ENCODE measurements at regions of chr3 and their contacts with region 1.

Region 1: DNA sequence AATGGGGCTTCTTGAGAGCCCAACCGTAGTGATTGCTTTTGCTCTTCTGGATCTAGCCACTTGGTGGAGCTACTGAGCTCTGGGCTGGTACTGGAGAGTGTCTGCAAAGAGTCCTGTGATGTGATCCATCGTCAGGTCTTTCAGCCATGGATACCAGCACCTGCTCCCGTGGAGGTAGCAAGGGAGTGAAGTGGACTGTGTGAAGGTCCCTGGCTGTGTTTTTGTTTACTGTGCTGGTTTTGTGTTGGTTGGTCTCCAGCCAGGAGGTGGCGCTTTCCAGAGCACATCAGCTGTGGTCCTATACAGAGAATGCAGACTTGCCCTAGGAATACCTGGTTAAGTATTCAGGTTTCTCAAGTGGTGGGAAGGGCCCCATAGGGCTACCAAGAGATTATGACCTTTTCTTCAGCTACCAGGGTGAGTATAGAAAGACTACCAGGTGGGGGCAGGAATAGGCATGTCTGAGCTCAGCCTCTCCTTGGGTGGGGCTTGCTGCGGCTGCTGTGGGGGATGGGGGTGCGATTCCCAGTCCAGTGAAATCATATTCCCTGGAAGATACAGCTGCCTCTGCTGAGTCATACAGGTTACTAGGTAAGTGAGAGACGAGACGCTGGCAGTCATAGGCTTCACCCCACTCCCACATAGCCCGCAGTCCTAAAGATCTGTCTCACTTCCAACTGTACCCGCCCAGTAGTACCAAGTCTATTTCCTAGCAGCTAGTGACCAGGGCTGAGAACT is 733.7 kb downstream of the ZNF385D start:
- DNase-seq: no peak
- ATAC-seq: peak; percentile 83
- H3K4me3 ChIP-seq: no peak overlapping the region
- H3K27ac ChIP-seq: no peak overlapping the region
- H3K4me1 ChIP-seq: no peaks in the 10 kb centered on the region
- H3K27me3 ChIP-seq: no peaks in the 10 kb centered on the region
- CTCF ChIP-seq: peak; percentile 29 to 32 (median 30); a peak in 4 of 6 replicates
- EP300 ChIP-seq: no peak
- POLR2A ChIP-seq: no peak
- RAD21 ChIP-seq: no peak

Region 2: GRCh38 chr3:21484057-21484827 is 467.0 kb after region 1 on chr3:
- CTCF ChIA-PET with region 1: interaction called, 40 read pairs
- POLR2A ChIA-PET with region 1: no interaction called
- RAD21 ChIA-PET with region 1: interaction called, 14 read pairs
- SMC1A ChIA-PET with region 1: interaction called, 29 read pairs
- in situ Hi-C with region 1: no loop called
- intact Hi-C with region 1: loop called (anchors 1 kb)
- DNase-seq: peak; percentile 4
- ATAC-seq: peak; percentile 96
- H3K4me3 ChIP-seq: no peak overlapping the region
- H3K27ac ChIP-seq: no peak overlapping the region
- H3K4me1 ChIP-seq: no peaks in the 10 kb centered on the region
- H3K27me3 ChIP-seq: no peaks in the 10 kb centered on the region
- CTCF ChIP-seq: peak; percentile 62 to 69 (median 67)
- EP300 ChIP-seq: no peak
- POLR2A ChIP-seq: no peak
- RAD21 ChIP-seq: peak; percentile 69

Region 3: DNA sequence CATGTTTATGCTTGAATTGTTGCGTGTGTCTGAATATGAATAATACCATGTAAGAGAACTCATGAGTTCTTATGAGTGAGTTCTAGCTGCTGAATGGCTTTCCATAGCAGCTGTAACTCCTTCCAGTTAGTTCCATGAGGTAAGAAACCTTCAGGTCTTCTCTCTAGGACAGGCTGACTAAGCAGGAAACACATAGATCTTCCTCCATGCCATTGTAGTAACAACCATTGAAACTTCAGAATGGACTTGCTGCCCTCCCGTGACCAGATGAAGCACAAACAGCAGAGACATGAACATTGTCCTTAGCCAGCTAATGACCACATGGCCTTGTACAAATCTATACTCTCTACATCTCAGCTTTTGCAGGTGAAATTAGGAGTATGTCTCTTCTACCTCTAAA is 533.7 kb after region 1 on chr3:
- CTCF ChIA-PET with region 1: interaction called, 11 read pairs
- POLR2A ChIA-PET with region 1: no interaction called
- RAD21 ChIA-PET with region 1: no interaction called
- SMC1A ChIA-PET with region 1: no interaction called
- in situ Hi-C with region 1: no loop called
- intact Hi-C with region 1: no loop called
- DNase-seq: no peak
- ATAC-seq: peak; percentile 63
- H3K4me3 ChIP-seq: no peak overlapping the region
- H3K27ac ChIP-seq: no peak overlapping the region
- H3K4me1 ChIP-seq: no peaks in the 10 kb centered on the region
- H3K27me3 ChIP-seq: no peaks in the 10 kb centered on the region
- CTCF ChIP-seq: no peak; a peak in 1 of 6 replicates
- EP300 ChIP-seq: no peak
- POLR2A ChIP-seq: no peak
- RAD21 ChIP-seq: peak; percentile 4; the same call in 1 of the 2 replicates

Measured in GM12878 (cell line).